ENCODE measurements at regions of chr19 and their contacts with region 1.

Region 1: DNA sequence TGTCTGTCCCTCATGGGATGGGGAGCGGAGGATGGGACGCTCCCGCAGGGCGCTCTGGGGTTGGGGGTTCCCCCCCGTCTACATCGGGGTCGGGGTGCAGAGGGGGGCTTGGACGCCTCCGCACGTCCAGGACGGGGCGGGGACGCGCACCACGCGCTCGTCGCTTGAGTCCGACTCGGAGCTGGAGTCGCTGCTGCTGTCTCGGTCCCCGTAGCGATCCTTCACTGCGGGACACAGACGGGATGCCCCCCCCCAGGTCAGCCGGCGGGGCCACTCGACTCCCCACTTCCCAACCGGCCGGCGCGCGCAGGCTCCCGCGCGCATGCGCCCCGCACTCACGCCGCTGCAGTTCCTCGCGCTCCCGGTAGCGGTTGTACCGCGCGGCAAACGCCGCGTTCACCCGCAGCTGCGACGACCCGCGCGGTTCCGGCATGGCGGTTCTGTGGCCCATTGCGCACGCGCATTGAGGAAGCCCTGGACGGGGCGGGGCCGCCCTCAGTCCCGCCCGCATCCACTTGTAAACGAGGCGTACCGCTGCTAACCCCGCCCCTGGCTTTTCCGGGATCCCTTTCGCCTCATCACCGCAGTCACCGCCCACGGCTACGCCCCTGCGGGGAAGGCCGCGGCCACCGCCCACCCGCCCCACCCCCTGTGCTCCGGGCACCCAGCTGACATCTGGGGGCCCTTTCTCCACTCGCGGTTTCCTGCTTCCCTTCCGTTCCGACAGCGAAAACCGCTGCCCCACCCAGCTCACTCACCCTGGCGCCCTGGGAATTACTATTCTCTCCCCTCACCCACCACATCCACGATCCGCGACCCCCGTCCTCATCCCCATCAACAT is at the start of gene KRI1:
- DNase-seq: peak; percentile 99
- H3K4me3 Mint-ChIP-seq: peak within 1 kb of the TSS; percentile 98
- H3K27ac Mint-ChIP-seq: peak within 1 kb of the TSS; percentile 98
- H3K4me1 Mint-ChIP-seq: peaks cover 31% of the 10 kb centered on the region
- H3K27me3 Mint-ChIP-seq: no peaks in the 10 kb centered on the region
- total RNA-seq, gene KRI1: 46.2 to 52.3 TPM

Region 2: DNA sequence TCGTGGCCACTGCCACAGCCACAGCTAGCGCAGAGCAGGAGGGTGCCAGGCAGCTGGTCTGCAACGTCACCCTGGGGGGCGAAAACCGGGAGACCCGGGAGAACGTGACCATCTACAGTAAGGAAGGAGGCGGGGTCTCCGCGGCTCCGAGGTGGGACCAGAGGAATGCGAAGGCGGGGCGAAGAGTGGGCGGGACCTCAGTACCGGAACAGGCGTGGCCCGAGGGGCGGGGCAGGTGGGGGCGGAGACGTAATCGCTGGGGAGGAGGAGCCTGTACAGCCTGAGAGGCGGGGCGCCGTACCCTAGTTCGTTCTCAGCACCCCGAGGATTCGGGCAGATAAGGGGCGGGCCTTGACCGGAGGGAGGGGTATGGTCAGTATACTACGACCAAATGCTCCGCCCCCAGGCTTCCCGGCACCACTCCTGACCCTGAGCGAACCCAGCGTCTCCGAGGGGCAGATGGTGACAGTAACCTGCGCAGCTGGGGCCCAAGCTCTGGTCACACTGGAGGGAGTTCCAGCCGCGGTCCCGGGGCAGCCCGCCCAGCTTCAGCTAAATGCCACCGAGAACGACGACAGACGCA is 273.5 kb before region 1 on chr19:
- CTCF ChIA-PET with region 1: no interaction called
- POLR2A ChIA-PET with region 1: no interaction called
- intact Hi-C with region 1: loop called (anchors 5 kb)
- DNase-seq: peak; percentile 87
- H3K4me3 Mint-ChIP-seq: peak overlapping the region; percentile 68
- H3K27ac Mint-ChIP-seq: no peak overlapping the region
- H3K4me1 Mint-ChIP-seq: peaks cover 61% of the 10 kb centered on the region
- H3K27me3 Mint-ChIP-seq: peaks cover 76% of the 10 kb centered on the region

Region 3: DNA sequence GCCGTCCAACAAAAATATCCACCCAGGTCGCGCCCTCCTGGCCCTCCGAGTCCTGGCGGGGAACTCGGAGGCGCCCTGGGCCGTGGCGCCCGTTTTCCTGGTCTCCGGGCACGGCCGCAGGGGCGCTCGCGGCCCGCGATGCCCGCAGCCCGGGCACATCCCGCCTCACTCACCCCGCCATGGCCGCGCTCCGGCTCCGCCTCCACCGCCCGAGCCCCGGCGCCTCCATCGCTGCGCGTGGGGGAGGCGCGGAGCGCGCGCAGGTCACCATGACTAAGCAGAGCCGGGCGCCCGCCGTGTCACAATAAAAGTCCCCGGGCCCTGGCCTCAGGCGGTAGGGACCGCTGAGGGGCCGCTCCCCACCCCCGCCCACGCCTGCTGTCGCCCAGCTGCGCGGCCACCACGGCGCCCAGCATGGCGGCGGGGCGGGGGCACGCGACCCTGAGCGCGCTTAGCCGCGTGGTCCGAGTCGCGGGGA is 63.2 kb before region 1 on chr19:
- CTCF ChIA-PET with region 1: interaction called, 6 read pairs
- POLR2A ChIA-PET with region 1: interaction called, 3 read pairs
- intact Hi-C with region 1: loop called (anchors 1 kb)
- DNase-seq: peak; percentile 94
- H3K4me3 Mint-ChIP-seq: peak overlapping the region; percentile 90
- H3K27ac Mint-ChIP-seq: peak overlapping the region; percentile 84
- H3K4me1 Mint-ChIP-seq: peaks cover 35% of the 10 kb centered on the region
- H3K27me3 Mint-ChIP-seq: no peaks in the 10 kb centered on the region

Region 4: DNA sequence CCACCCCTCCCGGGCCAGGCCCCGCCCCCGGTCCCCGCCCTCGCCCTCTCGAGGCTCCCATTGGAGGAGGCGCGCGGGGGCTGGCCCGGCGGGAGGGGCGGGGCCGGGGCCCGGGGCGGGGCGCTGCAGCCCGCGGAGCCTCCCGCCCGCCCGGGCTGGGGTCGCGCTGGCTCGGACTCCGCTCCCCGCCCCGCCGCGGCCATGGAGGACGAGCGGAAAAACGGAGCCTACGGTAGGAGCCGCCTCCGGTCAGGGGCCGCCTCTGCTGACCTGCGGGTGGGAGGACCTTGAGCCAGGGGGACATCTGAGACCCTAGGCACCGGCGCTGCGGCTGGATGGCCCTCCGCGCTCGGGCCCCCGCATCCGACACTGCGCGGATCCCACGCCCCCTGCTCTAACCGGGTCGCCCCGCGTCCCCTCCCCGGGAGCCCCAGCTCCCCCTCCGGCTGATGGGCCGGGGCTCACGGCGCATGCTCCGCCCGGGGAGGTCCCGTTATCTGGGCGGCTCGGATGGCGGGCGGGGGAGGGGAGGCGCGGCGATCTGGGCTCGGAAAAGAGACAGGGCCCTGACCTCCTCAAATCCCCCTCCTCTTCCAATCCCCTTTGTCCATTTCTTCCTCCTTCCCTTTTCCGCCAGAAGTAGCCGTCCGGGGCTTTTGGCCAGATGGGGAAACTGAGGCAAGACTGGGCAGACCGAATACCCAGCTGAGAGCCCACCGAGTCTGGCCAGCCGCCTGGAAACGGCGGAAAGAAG is 36.7 kb after region 1 on chr19:
- CTCF ChIA-PET with region 1: no interaction called
- POLR2A ChIA-PET with region 1: interaction called, 3 read pairs
- intact Hi-C with region 1: loop called (anchors 2 kb)
- DNase-seq: peak; percentile 94
- H3K4me3 Mint-ChIP-seq: peak overlapping the region; percentile 88
- H3K27ac Mint-ChIP-seq: peak overlapping the region; percentile 98
- H3K4me1 Mint-ChIP-seq: peaks cover 18% of the 10 kb centered on the region
- H3K27me3 Mint-ChIP-seq: no peaks in the 10 kb centered on the region

Region 5: GRCh38 chr19:10797541-10798256 is 231.9 kb after region 1 on chr19:
- CTCF ChIA-PET with region 1: no interaction called
- POLR2A ChIA-PET with region 1: no interaction called
- intact Hi-C with region 1: loop called (anchors 2 kb)
- DNase-seq: peak; percentile 98
- H3K4me3 Mint-ChIP-seq: peak overlapping the region; percentile 76
- H3K27ac Mint-ChIP-seq: peak overlapping the region; percentile 99
- H3K4me1 Mint-ChIP-seq: peaks cover 32% of the 10 kb centered on the region
- H3K27me3 Mint-ChIP-seq: no peaks in the 10 kb centered on the region

Measured in activated CD4-positive, alpha-beta memory T cell treated with anti-CD3 and anti-CD28 coated beads for 36 hours (primary cell).